Caco-2 (cell line): ENCODE measurements at regions of chr20 and their contacts with region 1.

Region 1: GRCh38 chr20:33097001-33097400 is 17.6 kb downstream of the BPIFB4 start:
- DNase-seq: no peak
- H3K4me3 ChIP-seq: no peak overlapping the region
- H3K4me3 Mint-ChIP-seq: no peak overlapping the region
- H3K27ac Mint-ChIP-seq: no peak overlapping the region
- H3K4me1 ChIP-seq: no peaks in the 10 kb centered on the region
- H3K4me1 Mint-ChIP-seq: no peaks in the 10 kb centered on the region
- H3K27me3 ChIP-seq: no peaks in the 10 kb centered on the region
- H3K27me3 Mint-ChIP-seq: peaks cover 11% of the 10 kb centered on the region
- CTCF ChIP-seq: no peak

Region 2: DNA sequence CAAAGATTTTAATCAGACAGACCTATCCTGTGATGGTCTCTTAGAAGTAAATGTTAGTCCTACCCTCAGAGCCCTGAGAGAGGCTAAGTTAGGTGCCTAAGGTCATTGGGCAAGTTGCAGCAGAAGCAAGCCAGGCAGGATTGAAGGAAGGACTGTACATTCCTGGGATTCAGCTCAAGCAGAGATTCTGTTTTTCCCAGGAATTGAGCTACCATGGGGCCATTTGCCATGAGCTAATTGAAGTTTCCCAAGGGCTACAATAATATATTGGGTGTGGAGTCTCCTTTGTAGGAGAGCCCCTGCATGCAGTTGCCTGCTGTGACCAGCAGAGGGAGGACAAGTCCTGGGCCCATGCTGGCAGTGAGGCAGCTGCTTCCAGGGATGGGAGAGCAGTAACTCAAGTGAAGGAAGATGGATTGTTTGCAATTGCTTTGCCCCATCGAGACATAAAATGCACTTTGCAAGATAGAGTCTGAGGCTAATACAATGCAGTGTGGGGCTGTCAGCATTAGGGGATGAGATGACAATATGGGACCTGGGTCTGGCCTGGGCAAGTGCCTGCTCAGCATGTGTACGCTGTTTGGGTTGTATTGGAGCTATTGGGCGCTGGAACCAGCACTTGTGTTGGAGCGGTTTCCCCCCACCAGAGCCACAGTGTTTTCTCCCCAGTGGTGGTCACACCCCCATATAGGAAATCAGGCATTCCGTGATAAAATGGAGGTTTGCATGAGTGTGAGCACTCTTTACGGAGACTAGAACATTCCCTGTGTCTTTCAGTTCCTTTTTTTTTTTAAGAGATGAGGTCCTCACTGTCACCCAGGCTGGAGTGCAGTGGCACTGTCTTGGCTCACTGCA is 306.9 kb before region 1 on chr20:
- CTCF ChIA-PET with region 1: interaction called, 4 read pairs
- POLR2A ChIA-PET with region 1: no interaction called
- intact Hi-C with region 1: loop called (anchors 1 kb)
- DNase-seq: peak; percentile 88 to 91
- H3K4me3 ChIP-seq: no peak overlapping the region
- H3K4me3 Mint-ChIP-seq: no peak overlapping the region
- H3K27ac Mint-ChIP-seq: no peak overlapping the region
- H3K4me1 ChIP-seq: peaks cover 13% of the 10 kb centered on the region; the same call in 1 of the 2 replicates
- H3K4me1 Mint-ChIP-seq: no peaks in the 10 kb centered on the region
- H3K27me3 ChIP-seq: no peaks in the 10 kb centered on the region
- H3K27me3 Mint-ChIP-seq: no peaks in the 10 kb centered on the region
- CTCF ChIP-seq: peak; percentile 100

Region 3: DNA sequence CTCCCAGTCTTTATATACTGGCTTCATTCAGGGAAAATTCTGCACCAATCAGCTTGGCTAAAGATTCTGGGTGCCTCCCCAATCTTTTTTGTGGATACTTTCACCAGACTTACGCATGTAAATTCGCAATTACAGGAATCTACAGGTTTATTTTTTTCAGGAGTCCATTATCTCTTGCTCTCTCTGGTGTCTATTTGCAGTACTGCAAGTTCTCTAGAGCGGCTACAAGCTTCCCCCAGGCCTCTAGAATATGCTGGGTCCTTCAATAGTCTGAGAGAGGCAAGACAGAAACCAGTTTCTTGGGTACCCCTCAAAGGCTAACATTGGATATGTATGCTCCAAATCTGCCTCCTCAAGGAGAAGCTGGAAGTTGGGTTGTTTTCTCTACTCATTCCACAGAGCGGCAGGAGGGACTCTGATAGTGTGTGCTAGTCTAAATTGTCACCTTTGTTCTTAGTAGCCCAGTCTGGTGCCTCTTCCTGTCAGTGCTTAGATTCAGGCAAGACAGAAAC is 151.2 kb before region 1 on chr20:
- CTCF ChIA-PET with region 1: no interaction called
- POLR2A ChIA-PET with region 1: no interaction called
- intact Hi-C with region 1: loop called (anchors 1 kb)
- DNase-seq: peak in 1 of 2 experiments; percentile 68
- H3K4me3 ChIP-seq: no peak overlapping the region
- H3K4me3 Mint-ChIP-seq: no peak overlapping the region
- H3K27ac Mint-ChIP-seq: no peak overlapping the region
- H3K4me1 ChIP-seq: no peaks in the 10 kb centered on the region
- H3K4me1 Mint-ChIP-seq: no peaks in the 10 kb centered on the region
- H3K27me3 ChIP-seq: no peaks in the 10 kb centered on the region; the same call in 1 of the 2 replicates
- H3K27me3 Mint-ChIP-seq: peaks cover 33% of the 10 kb centered on the region
- CTCF ChIP-seq: peak; percentile 91 to 92

Region 4: GRCh38 chr20:33005132-33005566 is 91.9 kb before region 1 on chr20:
- CTCF ChIA-PET with region 1: interaction called, 4 read pairs
- POLR2A ChIA-PET with region 1: no interaction called
- intact Hi-C with region 1: loop called (anchors 5 kb)
- DNase-seq: peak in 1 of 2 experiments; percentile 42
- H3K4me3 ChIP-seq: no peak overlapping the region
- H3K4me3 Mint-ChIP-seq: no peak overlapping the region
- H3K27ac Mint-ChIP-seq: no peak overlapping the region
- H3K4me1 ChIP-seq: no peaks in the 10 kb centered on the region
- H3K4me1 Mint-ChIP-seq: no peaks in the 10 kb centered on the region
- H3K27me3 ChIP-seq: no peaks in the 10 kb centered on the region; the same call in 1 of the 2 replicates
- H3K27me3 Mint-ChIP-seq: peaks cover 18% of the 10 kb centered on the region
- CTCF ChIP-seq: peak; percentile 59 to 84

Region 5: DNA sequence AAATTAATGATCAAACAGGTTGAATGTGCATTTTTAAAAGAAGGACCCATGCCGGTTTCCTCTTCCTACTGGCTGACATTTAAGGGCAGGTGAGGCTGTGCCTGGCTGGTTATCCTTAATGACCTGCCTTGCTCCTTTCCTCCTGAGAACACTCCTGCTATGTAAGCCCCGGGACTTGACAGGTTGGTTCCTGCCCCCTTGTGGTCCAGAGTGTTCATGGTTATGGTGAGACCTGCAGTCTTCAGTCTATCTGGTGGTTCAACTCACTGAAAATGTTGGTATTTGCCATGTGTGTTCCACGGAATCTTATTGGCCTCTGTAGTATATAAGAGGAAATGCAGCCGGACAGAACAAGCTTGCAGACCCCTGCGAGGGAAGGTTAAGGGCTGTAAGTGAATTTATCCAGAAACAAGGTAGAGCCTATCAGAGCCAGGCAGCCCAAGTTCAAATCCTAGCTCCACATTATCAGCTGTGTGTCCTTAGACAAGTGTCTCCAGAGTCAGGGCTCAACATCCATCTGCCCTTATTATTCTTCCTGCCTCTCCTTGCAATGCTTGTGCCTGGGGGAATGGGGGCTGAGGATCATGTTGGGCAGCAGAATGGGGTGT is 114.9 kb after region 1 on chr20:
- CTCF ChIA-PET with region 1: interaction called, 40 read pairs
- POLR2A ChIA-PET with region 1: no interaction called
- intact Hi-C with region 1: loop called (anchors 1 kb)
- DNase-seq: peak; percentile 92 to 93
- H3K4me3 ChIP-seq: no peak overlapping the region
- H3K4me3 Mint-ChIP-seq: no peak overlapping the region
- H3K27ac Mint-ChIP-seq: no peak overlapping the region
- H3K4me1 ChIP-seq: no peaks in the 10 kb centered on the region
- H3K4me1 Mint-ChIP-seq: no peaks in the 10 kb centered on the region
- H3K27me3 ChIP-seq: peaks cover 1% of the 10 kb centered on the region
- H3K27me3 Mint-ChIP-seq: peaks cover 29% of the 10 kb centered on the region
- CTCF ChIP-seq: peak; percentile 87 to 97